ENCODE measurements at regions of chr3 and their contacts with region 1.

Region 1: DNA sequence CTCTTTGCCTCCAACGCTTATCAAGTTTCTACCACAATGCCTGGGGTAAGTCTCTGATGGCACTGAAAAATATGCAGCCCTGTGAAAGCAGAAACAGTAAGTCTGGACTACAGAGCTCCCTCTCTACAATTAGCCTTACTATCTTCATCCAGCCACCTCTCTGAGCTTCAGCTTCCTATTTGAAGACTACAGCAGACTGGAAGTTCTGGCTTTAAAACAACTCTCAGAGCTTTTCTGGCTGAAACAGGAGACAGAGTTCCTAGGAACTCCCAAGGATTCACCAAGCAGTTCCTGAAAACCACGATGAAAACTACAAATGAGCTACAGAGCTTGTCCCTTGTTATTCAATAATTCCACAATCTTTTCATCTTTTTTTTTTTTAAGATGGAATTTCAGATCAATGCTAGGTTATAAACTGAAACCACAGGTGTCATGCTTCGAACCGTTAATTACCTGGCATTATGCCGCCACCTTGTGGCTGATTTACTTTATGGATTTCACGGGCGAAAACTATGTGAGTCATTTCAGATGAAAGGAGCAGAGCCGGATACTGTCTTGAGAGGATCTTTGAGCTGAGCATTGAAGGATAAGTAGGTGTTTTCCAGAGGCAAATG is 3.9 kb downstream of the CRYGS start:
- DNase-seq: peak; percentile 89
- ATAC-seq: peak; percentile 84
- H3K4me3 ChIP-seq: peak overlapping the region in 1 of 5 experiments; percentile 23
- H3K4me3 Mint-ChIP-seq: no peak overlapping the region
- H3K27ac ChIP-seq: no peak overlapping the region
- H3K27ac Mint-ChIP-seq: no peak overlapping the region
- H3K4me1 ChIP-seq: peaks cover 8 to 19% of the 10 kb centered on the region in 2 donors
- H3K4me1 Mint-ChIP-seq: peaks cover 25% of the 10 kb centered on the region
- H3K27me3 ChIP-seq: peaks cover 0 to 11% (median 5%) of the 10 kb centered on the region in 4 experiments
- H3K27me3 Mint-ChIP-seq: no peaks in the 10 kb centered on the region
- CTCF ChIP-seq: peak; percentile 82

Region 2: GRCh38 chr3:185942907-185943759 is 597.2 kb before region 1 on chr3:
- CTCF ChIA-PET with region 1: interaction called, 20 read pairs
- POLR2A ChIA-PET with region 1: no interaction called
- intact Hi-C with region 1: no loop called
- DNase-seq: peak; percentile 90
- ATAC-seq: peak; percentile 98
- H3K4me3 ChIP-seq: peak overlapping the region in 4 of 5 experiments; percentile 13 to 35 (median 21)
- H3K4me3 Mint-ChIP-seq: peak overlapping the region; percentile 70
- H3K27ac ChIP-seq: no peak overlapping the region
- H3K27ac Mint-ChIP-seq: peak overlapping the region; percentile 70
- H3K4me1 ChIP-seq: peaks cover 6 to 14% of the 10 kb centered on the region in 2 donors
- H3K4me1 Mint-ChIP-seq: peaks cover 14% of the 10 kb centered on the region
- H3K27me3 ChIP-seq: peaks cover 0 to 4% (median 2%) of the 10 kb centered on the region in 4 experiments
- H3K27me3 Mint-ChIP-seq: peaks cover 7% of the 10 kb centered on the region
- CTCF ChIP-seq: peak; percentile 98

Region 3: DNA sequence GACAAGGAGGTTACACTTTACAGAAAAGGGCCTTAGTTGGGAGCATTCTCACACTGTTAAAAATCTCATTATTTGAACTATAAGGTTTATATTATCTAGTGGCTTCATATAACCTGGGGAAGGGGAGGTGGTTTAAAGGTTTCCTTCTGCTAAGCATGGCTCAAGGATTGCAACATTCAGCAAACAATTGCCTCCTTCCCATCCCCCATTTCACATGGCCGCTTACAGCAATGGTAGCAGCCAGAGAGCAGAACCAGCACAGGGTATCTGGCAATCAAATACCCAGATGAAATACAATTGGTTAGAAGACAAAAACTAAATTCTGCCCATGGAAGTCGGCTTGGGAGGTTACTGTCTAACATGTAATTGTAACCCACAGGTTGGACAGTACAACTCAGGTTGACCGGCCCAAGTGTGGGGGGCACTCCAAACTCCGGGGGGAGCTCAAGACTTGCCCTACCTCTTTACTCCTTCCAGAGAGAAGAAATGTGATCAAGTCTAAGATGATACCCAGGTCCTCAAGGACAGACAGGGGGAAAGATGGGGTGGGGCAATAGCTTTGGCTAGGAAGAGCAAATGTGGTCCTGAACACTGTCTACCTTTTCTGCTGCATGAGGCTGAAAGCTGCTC is 446.9 kb before region 1 on chr3:
- CTCF ChIA-PET with region 1: interaction called, 18 read pairs
- POLR2A ChIA-PET with region 1: no interaction called
- intact Hi-C with region 1: loop called (anchors 1 kb)
- DNase-seq: no peak
- ATAC-seq: no peak
- H3K4me3 ChIP-seq: no peak overlapping the region
- H3K4me3 Mint-ChIP-seq: no peak overlapping the region
- H3K27ac ChIP-seq: no peak overlapping the region
- H3K27ac Mint-ChIP-seq: no peak overlapping the region
- H3K4me1 ChIP-seq: peaks cover 6 to 9% of the 10 kb centered on the region in 2 donors
- H3K4me1 Mint-ChIP-seq: peaks cover 4% of the 10 kb centered on the region
- H3K27me3 ChIP-seq: peaks cover 0 to 23% (median 7%) of the 10 kb centered on the region in 4 experiments
- H3K27me3 Mint-ChIP-seq: peaks cover 21% of the 10 kb centered on the region
- CTCF ChIP-seq: no peak

Region 4: DNA sequence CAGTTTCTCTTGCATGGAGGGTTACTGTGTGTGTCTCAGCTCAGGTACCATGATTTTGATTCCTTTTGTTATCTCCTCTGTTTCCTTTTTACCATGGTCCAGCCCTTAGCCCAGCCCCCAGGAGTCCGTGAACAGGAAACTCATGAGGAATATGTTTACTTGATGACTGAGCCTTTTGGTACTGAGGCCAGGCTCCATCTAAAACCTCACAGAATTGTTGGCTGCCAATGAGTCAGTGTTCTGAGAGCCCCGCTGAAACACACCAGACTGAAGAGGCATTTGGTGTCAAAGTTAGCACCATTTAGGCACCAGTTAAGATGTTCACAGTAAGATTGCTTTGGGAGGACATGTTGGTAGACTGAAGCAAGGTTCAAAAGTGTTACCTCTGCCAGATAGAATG is 259.2 kb before region 1 on chr3:
- CTCF ChIA-PET with region 1: interaction called, 15 read pairs
- POLR2A ChIA-PET with region 1: no interaction called
- intact Hi-C with region 1: no loop called
- DNase-seq: no peak
- ATAC-seq: no peak
- H3K4me3 ChIP-seq: no peak overlapping the region
- H3K4me3 Mint-ChIP-seq: peak overlapping the region; percentile 32
- H3K27ac ChIP-seq: no peak overlapping the region
- H3K27ac Mint-ChIP-seq: no peak overlapping the region
- H3K4me1 ChIP-seq: peaks cover 12 to 18% of the 10 kb centered on the region in 2 donors
- H3K4me1 Mint-ChIP-seq: peaks cover 18% of the 10 kb centered on the region
- H3K27me3 ChIP-seq: no peaks in the 10 kb centered on the region
- H3K27me3 Mint-ChIP-seq: no peaks in the 10 kb centered on the region
- CTCF ChIP-seq: no peak

Region 5: GRCh38 chr3:186471771-186472170 is 68.6 kb before region 1 on chr3:
- CTCF ChIA-PET with region 1: interaction called, 10 read pairs
- POLR2A ChIA-PET with region 1: no interaction called
- intact Hi-C with region 1: no loop called
- DNase-seq: no peak
- ATAC-seq: no peak
- H3K4me3 ChIP-seq: no peak overlapping the region
- H3K4me3 Mint-ChIP-seq: no peak overlapping the region
- H3K27ac ChIP-seq: no peak overlapping the region
- H3K27ac Mint-ChIP-seq: no peak overlapping the region
- H3K4me1 ChIP-seq: no peaks in the 10 kb centered on the region
- H3K4me1 Mint-ChIP-seq: no peaks in the 10 kb centered on the region
- H3K27me3 ChIP-seq: no peaks in the 10 kb centered on the region
- H3K27me3 Mint-ChIP-seq: peaks cover 3% of the 10 kb centered on the region
- CTCF ChIP-seq: no peak

Region 6: GRCh38 chr3:186520957-186521842 is 19.1 kb before region 1 on chr3:
- CTCF ChIA-PET with region 1: interaction called, 56 read pairs
- POLR2A ChIA-PET with region 1: interaction called, 3 read pairs
- intact Hi-C with region 1: loop called (anchors 2 kb)
- DNase-seq: peak; percentile 69
- ATAC-seq: peak; percentile 39
- H3K4me3 ChIP-seq: peak overlapping the region in 1 of 5 experiments; percentile 12
- H3K4me3 Mint-ChIP-seq: peak overlapping the region; percentile 30
- H3K27ac ChIP-seq: peak overlapping the region; percentile 19 to 64
- H3K27ac Mint-ChIP-seq: peak overlapping the region; percentile 88
- H3K4me1 ChIP-seq: peaks cover 52 to 59% of the 10 kb centered on the region in 2 donors
- H3K4me1 Mint-ChIP-seq: peaks cover 68% of the 10 kb centered on the region
- H3K27me3 ChIP-seq: peaks cover 0 to 4% (median 0%) of the 10 kb centered on the region in 4 experiments
- H3K27me3 Mint-ChIP-seq: peaks cover 3% of the 10 kb centered on the region
- CTCF ChIP-seq: no peak

Measured in B cell (primary cell).